ENCODE measurements at regions of chr6 and their contacts with region 1.

Region 1: GRCh38 chr6:79949233-79949632 is 1.9 kb upstream of the ELOVL4 start:
- DNase-seq: peak in 3 of 10 donors; percentile 11 to 35 (median 31)

Region 2: DNA sequence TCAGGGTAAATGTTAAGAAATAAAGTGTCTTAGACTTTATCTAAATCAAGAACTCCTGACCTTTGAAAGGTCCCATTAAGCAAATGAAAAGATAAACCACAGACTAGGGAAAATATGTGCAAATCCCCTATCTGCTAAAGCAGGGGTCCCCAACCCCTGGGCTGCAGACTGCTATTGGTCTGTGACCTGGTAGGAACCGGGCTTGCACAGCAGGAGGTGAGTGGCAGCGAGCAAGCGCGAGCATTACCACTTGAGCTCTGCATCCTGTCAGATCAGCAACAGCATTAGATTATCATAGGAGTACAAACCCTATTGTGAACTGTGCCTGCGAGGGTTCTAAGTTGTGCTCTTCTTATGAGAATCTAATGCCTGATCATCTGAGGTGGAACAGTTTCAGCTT is 454.4 kb before region 1 on chr6:
- intact Hi-C with region 1: no loop called
- DNase-seq: no peak

Region 3: DNA sequence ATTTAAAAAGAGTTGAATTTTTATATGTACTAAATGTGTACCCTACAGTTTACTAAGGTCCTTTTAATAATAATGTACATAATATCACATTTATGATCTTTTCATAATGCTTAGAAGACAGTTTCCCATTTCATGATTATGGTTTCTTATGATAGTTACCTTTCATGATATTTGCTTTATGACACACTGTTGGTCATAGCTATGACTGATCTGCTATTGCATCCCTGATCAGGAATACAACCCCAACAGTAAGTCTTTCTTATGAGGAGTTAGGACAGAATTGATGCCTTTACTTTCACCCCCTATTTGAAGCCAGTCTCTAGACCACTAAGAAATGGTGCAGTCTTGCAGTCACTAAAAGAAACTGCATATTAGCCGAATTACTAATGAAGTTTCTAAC is 443.0 kb before region 1 on chr6:
- intact Hi-C with region 1: no loop called
- DNase-seq: no peak

Region 4: GRCh38 chr6:80004173-80005072 is 55.2 kb after region 1 on chr6 and contains the start of gene TTK:
- intact Hi-C with region 1: loop called (anchors 2 kb)
- DNase-seq: peak; percentile 82 to 99 (median 90)

Region 5: DNA sequence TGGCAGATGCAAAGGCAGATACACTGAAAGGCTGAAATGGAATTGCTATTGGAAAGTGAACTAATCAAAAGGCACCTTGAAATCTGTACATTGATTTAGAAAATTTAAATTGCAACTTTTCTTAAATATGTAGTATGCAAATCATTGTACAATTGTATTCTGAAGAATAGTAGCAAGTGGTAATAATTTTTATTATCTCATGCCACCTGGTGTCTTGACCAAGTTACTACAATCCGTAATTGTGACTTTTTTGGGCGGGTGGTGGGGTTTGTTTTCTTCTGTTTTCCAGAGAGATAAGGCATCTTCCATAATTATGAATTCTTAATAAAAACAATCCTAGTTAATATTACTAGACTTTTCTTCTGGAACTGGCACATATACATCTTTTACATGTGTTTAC is 144.8 kb after region 1 on chr6:
- intact Hi-C with region 1: loop called (anchors 5 kb)
- DNase-seq: no peak

Region 6: DNA sequence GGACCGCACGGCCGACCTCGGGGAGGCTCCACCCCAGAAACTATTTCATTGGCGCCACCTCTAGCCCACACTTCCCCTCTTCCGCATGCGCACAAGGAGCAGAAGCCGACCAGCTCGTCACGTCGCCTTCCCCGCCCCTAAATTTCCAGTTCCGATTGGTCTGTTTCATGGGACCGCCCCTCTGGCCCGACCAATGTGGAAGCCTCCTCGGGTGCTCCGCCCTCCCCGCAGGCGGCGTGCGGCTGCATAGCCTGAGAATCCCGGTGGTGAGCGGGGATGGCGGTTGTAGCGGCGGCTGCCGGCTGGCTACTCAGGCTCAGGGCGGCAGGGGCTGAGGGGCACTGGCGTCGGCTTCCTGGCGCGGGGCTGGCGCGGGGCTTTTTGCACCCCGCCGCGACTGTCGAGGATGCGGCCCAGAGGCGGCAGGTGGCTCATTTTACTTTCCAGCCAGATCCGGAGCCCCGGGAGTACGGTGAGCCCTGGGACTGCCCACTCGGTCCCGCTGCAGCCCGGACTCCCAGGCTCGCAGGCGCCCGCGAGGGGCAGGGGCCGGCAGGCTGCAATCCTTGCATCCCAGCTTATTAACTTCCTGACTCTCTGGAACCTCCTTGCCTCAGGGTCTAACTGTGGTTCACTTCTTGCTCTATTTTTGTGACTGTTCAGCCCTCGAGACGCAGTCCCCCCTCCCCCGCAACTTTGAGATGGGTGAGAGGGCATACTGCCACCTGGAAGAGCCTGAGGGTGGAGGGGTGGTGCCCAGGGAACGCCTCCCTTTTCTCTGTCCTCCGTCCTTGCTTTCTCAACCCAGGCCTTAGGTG is 157.4 kb after region 1 on chr6 and contains the start of gene BCKDHB:
- intact Hi-C with region 1: loop called (anchors 5 kb)
- DNase-seq: peak; percentile 97 to 100 (median 98)